ENCODE measurements at regions of chr14 and their contacts with region 1.

Region 1: GRCh38 chr14:23727566-23728335 is 91.6 kb downstream of the DHRS2 start:
- DNase-seq: peak; percentile 26
- ATAC-seq: peak; percentile 94
- H3K4me3 ChIP-seq: no peak overlapping the region
- H3K27ac ChIP-seq: no peak overlapping the region
- H3K4me1 ChIP-seq: no peaks in the 10 kb centered on the region
- H3K27me3 ChIP-seq: no peaks in the 10 kb centered on the region
- CTCF ChIP-seq: peak; percentile 41; the same call in 1 of the 2 replicates
- POLR2A ChIP-seq: no peak
- RAD21 ChIP-seq: peak; percentile 50

Region 2: GRCh38 chr14:23910101-23910875 is 182.5 kb after region 1 on chr14:
- CTCF ChIA-PET with region 1: interaction called, 4 read pairs
- POLR2A ChIA-PET with region 1: no interaction called
- dilution Hi-C with region 1: no loop called
- in situ Hi-C with region 1: loop called (anchors 5 kb)
- intact Hi-C with region 1: loop called (anchors 1 kb)
- DNase-seq: peak; percentile 48
- ATAC-seq: peak; percentile 98
- H3K4me3 ChIP-seq: no peak overlapping the region
- H3K27ac ChIP-seq: no peak overlapping the region
- H3K4me1 ChIP-seq: no peaks in the 10 kb centered on the region
- H3K27me3 ChIP-seq: peaks cover 3% of the 10 kb centered on the region; the same call in 1 of the 2 replicates
- CTCF ChIP-seq: peak; percentile 81
- POLR2A ChIP-seq: no peak
- RAD21 ChIP-seq: peak; percentile 87

Region 3: DNA sequence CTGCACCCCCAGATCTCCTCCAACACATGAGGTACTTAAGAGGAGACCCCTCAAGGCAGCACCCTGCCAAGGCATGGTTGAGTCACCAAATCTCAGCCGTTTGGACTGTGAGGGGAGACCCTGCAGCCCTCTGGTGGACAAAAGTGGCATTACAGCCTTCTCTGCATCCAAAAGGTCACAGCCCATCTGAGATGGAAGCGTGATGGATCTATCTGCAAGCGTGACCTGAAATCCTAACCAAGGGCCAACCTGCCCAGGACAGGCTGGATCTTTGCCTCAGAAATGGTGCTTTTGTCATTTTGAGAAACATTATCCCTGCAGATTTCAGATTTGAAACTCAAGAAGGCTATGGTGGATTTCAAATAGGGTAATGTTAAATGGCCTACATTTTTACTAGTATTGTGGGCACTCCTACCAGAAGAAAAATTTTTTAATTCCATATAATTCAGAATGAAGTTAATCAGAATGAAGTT is 202.1 kb after region 1 on chr14:
- CTCF ChIA-PET with region 1: no interaction called
- POLR2A ChIA-PET with region 1: no interaction called
- dilution Hi-C with region 1: no loop called
- in situ Hi-C with region 1: no loop called
- intact Hi-C with region 1: loop called (anchors 1 kb)
- DNase-seq: peak; percentile 69
- ATAC-seq: peak; percentile 99
- H3K4me3 ChIP-seq: no peak overlapping the region
- H3K27ac ChIP-seq: no peak overlapping the region
- H3K4me1 ChIP-seq: no peaks in the 10 kb centered on the region
- H3K27me3 ChIP-seq: peaks cover 4% of the 10 kb centered on the region; the same call in 1 of the 2 replicates
- CTCF ChIP-seq: peak; percentile 78
- POLR2A ChIP-seq: no peak
- RAD21 ChIP-seq: peak; percentile 69

Region 4: DNA sequence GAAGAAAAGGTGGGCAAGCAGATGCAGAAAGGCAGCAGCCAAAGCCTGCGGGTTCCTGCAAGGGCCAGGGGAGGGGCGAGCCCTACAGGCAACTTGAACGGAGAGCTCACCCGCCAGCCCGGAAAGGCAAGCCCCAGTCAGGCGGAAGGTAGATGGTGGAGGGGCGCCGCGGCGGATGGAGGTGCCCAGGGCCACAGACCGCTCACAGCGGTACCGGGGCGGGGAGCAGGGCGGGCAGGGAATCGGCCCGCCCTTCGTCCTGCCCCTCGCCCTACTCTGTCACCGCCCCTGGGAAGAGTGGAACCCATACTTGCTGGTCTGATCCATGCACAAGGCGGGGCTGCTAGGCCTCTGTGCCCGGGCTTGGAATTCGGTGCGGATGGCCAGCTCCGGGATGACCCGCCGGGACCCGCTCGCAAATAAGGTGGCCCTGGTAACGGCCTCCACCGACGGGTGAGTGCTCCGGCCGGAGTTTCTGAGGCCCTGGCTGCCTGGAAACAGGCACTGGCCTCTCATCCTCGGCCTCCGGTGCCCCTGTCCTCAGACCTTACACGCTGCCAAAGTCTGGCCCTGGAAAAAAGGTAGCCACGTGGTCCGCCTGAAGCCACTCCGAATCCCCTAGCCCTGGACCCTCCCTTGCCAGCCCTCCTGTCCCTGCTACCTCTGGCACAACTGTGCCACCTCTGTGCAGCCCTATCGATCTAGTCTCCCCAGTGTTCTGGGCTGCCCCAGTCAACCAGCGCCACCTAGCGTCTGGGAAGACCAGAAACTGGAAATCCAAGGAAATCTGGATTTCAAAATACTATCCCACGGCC is 225.9 kb after region 1 on chr14 and contains the start of gene DHRS4:
- CTCF ChIA-PET with region 1: no interaction called
- POLR2A ChIA-PET with region 1: no interaction called
- dilution Hi-C with region 1: no loop called
- in situ Hi-C with region 1: no loop called
- intact Hi-C with region 1: loop called (anchors 1 kb)
- DNase-seq: peak; percentile 76
- ATAC-seq: peak; percentile 100
- H3K4me3 ChIP-seq: peak within 1 kb of the TSS; percentile 98
- H3K27ac ChIP-seq: peak within 1 kb of the TSS; percentile 70
- H3K4me1 ChIP-seq: peaks cover 2% of the 10 kb centered on the region; the same call in 1 of the 2 replicates
- H3K27me3 ChIP-seq: no peaks in the 10 kb centered on the region
- CTCF ChIP-seq: peak; percentile 84
- POLR2A ChIP-seq: peak; percentile 66
- RAD21 ChIP-seq: peak; percentile 63
- total RNA-seq, gene DHRS4: 43.2 and 48.9 TPM in 2 replicates